ENCODE measurements at regions of chr3 and their contacts with region 1.

Region 1: DNA sequence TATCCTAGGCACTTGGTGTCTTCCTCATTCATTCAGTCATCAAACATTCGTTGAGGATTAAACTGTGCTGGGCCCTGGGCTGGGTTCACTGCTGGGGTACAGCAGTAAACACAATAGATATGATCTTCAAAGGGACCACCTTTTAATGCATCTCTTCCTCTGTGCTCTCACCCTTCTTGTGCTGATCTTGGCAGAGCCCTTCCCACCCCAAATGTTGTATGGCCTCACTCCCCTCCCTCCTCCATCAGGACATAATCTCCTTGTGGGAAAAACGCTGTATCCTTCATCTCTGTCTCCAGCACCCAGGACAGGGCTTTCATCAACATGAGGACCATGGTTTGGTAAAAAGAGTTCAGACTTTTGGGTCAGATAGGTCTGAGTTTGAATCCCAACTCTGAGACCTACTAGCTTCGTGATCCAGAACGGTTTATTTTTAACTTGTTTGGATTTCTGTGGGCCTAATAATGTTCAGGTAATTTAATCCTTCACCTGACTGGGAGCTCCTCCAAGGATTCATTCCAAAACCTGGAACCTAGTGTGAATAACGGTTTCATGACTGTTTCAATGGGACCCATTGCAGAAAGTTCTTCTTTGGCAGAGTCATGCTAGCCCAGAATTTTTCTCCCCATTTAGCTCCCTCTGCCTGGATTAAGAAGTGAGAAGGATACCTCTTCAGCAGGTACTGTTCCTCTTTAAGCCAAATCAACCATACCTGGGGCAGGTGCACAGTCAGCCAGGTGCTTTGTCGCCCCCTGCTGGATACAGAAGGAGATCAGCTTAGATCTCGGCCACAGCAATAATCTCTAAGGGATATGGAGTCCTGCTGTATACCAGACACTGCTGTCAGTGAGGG is 5.2 kb upstream of the WNT7A start:
- DNase-seq: peak; percentile 72
- H3K4me3 ChIP-seq: peak overlapping the region in 1 of 2 experiments; percentile 28; a peak in 1 of 4 replicates
- H3K27ac ChIP-seq: no peak overlapping the region
- H3K4me1 ChIP-seq: peaks cover 0 to 4% of the 10 kb centered on the region in 2 experiments; a peak in 1 of 4 replicates
- H3K27me3 ChIP-seq: peaks cover 11% of the 10 kb centered on the region; the same call in 1 of the 2 replicates
- CTCF ChIP-seq: peak; percentile 66
- EP300 ChIP-seq: no peak
- RAD21 ChIP-seq: peak; percentile 72

Region 2: DNA sequence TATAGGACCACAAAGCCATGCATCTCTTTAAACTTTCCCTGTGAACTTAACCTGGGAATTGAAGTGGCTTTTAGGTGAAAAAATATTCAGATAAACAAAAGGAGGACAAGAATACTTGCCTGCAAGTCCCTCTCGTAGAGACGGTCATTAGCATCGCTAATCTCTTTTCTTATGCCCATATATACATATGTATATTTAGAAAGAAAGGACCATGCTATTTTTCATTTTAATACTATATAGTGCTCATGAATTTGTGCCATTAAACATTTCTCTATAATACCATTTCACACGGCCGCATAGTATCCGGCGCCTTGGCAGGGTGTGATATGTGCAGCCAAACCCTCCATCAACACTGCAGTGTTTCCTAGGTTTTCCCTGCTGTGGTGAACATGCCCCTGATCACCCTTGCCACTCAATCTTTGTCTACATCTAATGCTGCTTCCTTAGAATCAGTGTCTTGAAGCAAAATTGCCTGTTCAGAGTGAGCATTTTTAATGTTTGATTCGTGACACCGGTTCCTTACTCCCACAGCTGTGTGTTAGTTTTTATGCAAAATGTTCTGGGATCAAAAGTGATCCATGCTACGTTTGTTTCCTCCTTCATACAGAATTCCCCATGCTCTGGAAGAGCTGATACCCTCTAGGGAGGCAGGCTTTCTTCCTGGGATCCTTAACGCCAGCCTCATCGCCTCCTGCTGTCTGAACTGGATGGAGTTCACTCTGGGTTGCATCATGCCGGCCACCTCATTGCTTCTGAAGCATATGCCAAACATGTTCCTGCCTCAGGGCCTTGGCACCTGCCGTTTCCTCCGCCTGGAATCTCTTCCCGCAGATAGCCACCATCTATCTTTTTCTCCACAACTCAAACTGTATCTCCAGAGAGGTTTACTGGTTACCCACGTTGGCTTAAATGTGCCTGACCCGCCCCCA is 218.0 kb before region 1 on chr3:
- CTCF ChIA-PET with region 1: interaction called, 979 read pairs
- POLR2A ChIA-PET with region 1: no interaction called
- DNase-seq: no peak
- H3K4me3 ChIP-seq: no peak overlapping the region
- H3K27ac ChIP-seq: no peak overlapping the region
- H3K4me1 ChIP-seq: no peaks in the 10 kb centered on the region; a peak in 1 of 4 replicates
- H3K27me3 ChIP-seq: no peaks in the 10 kb centered on the region
- CTCF ChIP-seq: no peak
- EP300 ChIP-seq: no peak
- RAD21 ChIP-seq: no peak

Region 3: DNA sequence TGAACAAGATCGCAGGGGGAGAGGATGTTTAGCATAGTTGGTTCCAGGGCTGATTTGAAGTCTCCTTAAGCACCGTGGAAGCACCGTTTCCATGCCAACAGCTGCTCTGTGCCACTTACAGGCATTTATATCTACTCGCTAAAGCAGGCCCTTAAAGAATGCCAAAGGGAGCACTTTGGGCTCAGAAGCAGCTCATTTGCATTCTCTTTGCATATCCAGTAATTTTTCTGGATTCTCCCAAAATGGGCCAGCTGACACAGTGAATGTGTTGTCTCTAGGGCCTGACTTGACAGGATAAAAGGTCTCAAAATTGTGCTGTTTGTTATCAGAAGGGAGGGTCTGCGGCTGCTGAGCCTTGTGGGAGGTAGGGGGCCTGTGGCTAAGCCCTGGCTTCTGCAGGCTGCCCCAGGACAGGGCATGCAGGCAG is 197.5 kb before region 1 on chr3:
- CTCF ChIA-PET with region 1: interaction called, 34 read pairs
- POLR2A ChIA-PET with region 1: no interaction called
- DNase-seq: no peak
- H3K4me3 ChIP-seq: no peak overlapping the region
- H3K27ac ChIP-seq: no peak overlapping the region
- H3K4me1 ChIP-seq: peaks cover 0 to 18% of the 10 kb centered on the region in 2 experiments; a peak in 1 of 4 replicates
- H3K27me3 ChIP-seq: no peaks in the 10 kb centered on the region
- CTCF ChIP-seq: no peak
- EP300 ChIP-seq: no peak
- RAD21 ChIP-seq: no peak

Region 4: DNA sequence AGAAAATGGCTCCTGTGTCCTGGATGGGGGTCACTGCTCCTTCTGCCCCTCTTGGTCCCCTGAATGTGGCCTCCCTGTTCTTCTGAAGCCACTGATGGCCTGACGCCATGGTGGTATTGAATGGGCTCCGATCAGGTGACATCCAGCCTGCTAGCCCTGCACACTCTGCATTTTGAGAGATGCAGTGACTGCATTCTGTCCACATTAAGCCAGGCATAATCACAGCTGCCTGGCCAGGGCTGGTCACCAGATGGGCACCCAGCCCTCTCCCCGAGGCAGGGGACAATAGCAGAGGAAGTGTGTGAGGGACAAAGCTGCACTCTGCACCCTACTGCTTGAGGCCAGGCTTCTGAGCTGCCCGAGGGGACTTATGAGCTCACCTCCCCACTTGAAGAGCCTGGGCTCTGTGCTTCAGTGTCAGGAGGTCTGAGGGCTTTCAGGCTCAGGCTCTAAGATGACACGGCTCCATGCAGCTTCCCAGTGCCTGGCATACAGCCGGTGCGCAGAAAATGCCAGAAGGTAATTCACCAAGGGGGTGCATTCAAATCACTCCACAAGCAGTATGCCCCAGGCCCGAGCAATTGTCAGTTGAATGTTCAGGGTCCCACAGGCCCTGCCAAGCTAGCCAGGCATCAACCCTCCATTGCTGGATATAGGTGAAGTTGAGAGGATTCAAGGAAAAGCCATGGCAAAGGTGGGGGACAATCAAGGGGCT is 62.0 kb before region 1 on chr3:
- CTCF ChIA-PET with region 1: interaction called, 11 read pairs
- POLR2A ChIA-PET with region 1: no interaction called
- DNase-seq: peak; percentile 64
- H3K4me3 ChIP-seq: no peak overlapping the region
- H3K27ac ChIP-seq: peak overlapping the region in 1 of 2 experiments; percentile 50; a peak in 1 of 4 replicates
- H3K4me1 ChIP-seq: peaks cover 0 to 12% of the 10 kb centered on the region in 2 experiments; a peak in 1 of 4 replicates
- H3K27me3 ChIP-seq: no peaks in the 10 kb centered on the region
- CTCF ChIP-seq: no peak
- EP300 ChIP-seq: no peak
- RAD21 ChIP-seq: no peak

Region 5: DNA sequence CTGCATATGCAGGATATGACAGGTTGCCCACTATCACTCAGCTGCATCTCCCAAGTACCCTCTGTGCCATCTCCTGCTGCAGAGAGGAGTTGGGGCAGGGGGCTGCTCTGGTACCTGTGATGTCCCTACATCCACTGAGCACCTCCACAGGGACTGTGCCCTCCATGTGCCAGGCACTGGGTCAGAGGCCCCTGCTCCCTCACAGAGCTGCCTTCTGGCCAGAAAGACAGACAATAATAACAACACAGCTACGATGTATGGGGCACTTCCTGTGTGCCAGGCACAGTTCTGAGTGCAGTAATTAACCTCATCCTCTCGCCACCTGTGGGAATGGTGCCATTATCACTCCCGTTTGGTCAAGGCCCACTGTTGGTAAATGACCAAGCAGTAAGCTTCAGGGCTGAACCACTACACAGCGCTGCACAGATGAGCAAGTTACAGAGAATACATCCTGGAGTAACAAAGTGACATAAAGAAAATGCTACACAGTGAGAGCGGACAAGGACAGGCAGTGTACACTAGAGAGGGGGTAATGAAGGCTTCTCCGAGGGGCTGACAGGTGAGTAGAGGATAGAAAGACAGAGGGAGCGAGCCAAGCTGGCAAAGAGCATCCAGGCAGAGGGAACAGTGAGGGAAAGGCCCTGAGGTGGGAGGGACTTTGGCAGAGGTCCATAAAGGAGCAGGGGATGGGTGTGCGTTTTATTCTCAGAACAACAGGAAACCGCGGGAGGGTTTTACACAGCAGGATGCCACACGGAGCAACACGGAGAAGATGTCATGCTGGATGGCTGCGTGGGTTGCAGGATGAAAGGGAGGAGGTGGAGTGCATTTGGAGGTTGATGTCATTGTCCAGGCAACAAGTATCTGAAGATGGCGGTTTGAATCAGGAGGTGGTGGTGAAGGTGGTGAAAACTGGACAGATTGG is 18.8 kb before region 1 on chr3:
- CTCF ChIA-PET with region 1: interaction called, 28 read pairs
- POLR2A ChIA-PET with region 1: no interaction called
- DNase-seq: no peak
- H3K4me3 ChIP-seq: no peak overlapping the region
- H3K27ac ChIP-seq: no peak overlapping the region
- H3K4me1 ChIP-seq: peaks cover 0 to 5% of the 10 kb centered on the region in 2 experiments; a peak in 1 of 4 replicates
- H3K27me3 ChIP-seq: no peaks in the 10 kb centered on the region
- CTCF ChIP-seq: no peak
- EP300 ChIP-seq: no peak
- RAD21 ChIP-seq: no peak